CD4-positive, alpha-beta T cell (primary cell): ENCODE measurements at regions of chr6 and their contacts with region 1.

Region 1: GRCh38 chr6:34196126-34196830 is 40.4 kb upstream of the HMGA1 start:
- DNase-seq: peak; percentile 79 to 96 (median 90)
- ATAC-seq: peak; percentile 99
- H3K4me3 ChIP-seq: peak overlapping the region; percentile 64
- H3K4me3 Mint-ChIP-seq: peak overlapping the region; percentile 86
- H3K27ac ChIP-seq: no peak overlapping the region
- H3K27ac Mint-ChIP-seq: no peak overlapping the region
- H3K4me1 ChIP-seq: peaks cover 12% of the 10 kb centered on the region
- H3K4me1 Mint-ChIP-seq: peaks cover 7% of the 10 kb centered on the region
- H3K27me3 ChIP-seq: no peaks in the 10 kb centered on the region
- H3K27me3 Mint-ChIP-seq: no peaks in the 10 kb centered on the region
- CTCF ChIP-seq: peak; percentile 98

Region 2: GRCh38 chr6:33579828-33580714 is 616.2 kb before region 1 on chr6 and contains the start of gene BAK1:
- CTCF ChIA-PET with region 1: no interaction called
- POLR2A ChIA-PET with region 1: no interaction called
- intact Hi-C with region 1: no loop called
- DNase-seq: peak; percentile 64 to 92 (median 78)
- ATAC-seq: peak; percentile 93
- H3K4me3 ChIP-seq: peak within 1 kb of the TSS; percentile 99
- H3K4me3 Mint-ChIP-seq: peak within 1 kb of the TSS; percentile 96
- H3K27ac ChIP-seq: peak within 1 kb of the TSS; percentile 82 to 88
- H3K27ac Mint-ChIP-seq: peak within 1 kb of the TSS; percentile 97
- H3K4me1 ChIP-seq: peaks cover 51% of the 10 kb centered on the region
- H3K4me1 Mint-ChIP-seq: peaks cover 44% of the 10 kb centered on the region
- H3K27me3 ChIP-seq: no peaks in the 10 kb centered on the region
- H3K27me3 Mint-ChIP-seq: no peaks in the 10 kb centered on the region
- CTCF ChIP-seq: peak; percentile 63
- total RNA-seq, gene BAK1: 38.3 to 40.8 TPM

Region 3: DNA sequence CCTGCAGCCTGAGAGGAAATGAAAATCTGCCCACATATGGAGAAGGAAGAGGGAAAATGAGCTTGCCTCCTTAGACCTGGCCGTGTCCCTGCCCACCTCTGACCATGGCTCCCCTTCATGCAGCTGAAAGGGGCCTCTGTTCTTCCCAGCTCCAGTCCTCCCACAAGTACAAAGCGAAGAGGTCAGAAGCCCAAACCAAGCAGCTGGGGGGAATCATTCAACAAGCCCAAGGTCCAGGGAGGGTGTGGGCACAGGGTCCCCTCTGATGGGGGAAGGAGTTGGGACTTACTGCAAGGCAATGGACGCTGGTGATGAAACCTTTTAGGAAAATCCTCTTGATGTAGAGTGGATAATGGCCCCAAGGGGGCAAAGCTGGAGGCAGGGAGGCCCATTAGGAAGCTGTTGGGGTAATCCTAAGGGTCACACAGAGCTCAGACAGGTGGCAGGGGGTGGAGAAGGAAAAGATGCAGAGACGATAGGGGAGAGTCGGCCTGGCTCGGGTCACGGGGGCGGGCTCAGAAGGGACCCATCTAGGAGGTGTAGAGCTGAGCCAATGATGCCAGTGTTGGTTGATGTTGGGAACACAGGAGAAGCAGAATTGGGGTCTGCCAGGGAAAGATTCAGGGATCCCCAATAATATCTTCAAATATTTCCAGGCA is 34.3 kb before region 1 on chr6:
- CTCF ChIA-PET with region 1: interaction called, 12 read pairs
- POLR2A ChIA-PET with region 1: interaction called, 3 read pairs
- intact Hi-C with region 1: loop called (anchors 2 kb)
- DNase-seq: no peak
- ATAC-seq: no peak
- H3K4me3 ChIP-seq: no peak overlapping the region
- H3K4me3 Mint-ChIP-seq: no peak overlapping the region
- H3K27ac ChIP-seq: no peak overlapping the region
- H3K27ac Mint-ChIP-seq: no peak overlapping the region
- H3K4me1 ChIP-seq: peaks cover 3% of the 10 kb centered on the region
- H3K4me1 Mint-ChIP-seq: no peaks in the 10 kb centered on the region
- H3K27me3 ChIP-seq: no peaks in the 10 kb centered on the region
- H3K27me3 Mint-ChIP-seq: no peaks in the 10 kb centered on the region
- CTCF ChIP-seq: no peak

Region 4: GRCh38 chr6:34223956-34224940 is 28.0 kb after region 1 on chr6:
- CTCF ChIA-PET with region 1: interaction called, 7 read pairs
- POLR2A ChIA-PET with region 1: interaction called, 16 read pairs
- intact Hi-C with region 1: no loop called
- DNase-seq: peak; percentile 87 to 99 (median 93)
- ATAC-seq: peak; percentile 95
- H3K4me3 ChIP-seq: peak overlapping the region; percentile 62
- H3K4me3 Mint-ChIP-seq: peak overlapping the region; percentile 63
- H3K27ac ChIP-seq: peak overlapping the region; percentile 89 to 99
- H3K27ac Mint-ChIP-seq: peak overlapping the region; percentile 75
- H3K4me1 ChIP-seq: peaks cover 20% of the 10 kb centered on the region
- H3K4me1 Mint-ChIP-seq: peaks cover 6% of the 10 kb centered on the region
- H3K27me3 ChIP-seq: no peaks in the 10 kb centered on the region
- H3K27me3 Mint-ChIP-seq: no peaks in the 10 kb centered on the region
- CTCF ChIP-seq: no peak

Region 5: GRCh38 chr6:34414999-34415858 is 219.0 kb after region 1 on chr6:
- CTCF ChIA-PET with region 1: interaction called, 55 read pairs
- POLR2A ChIA-PET with region 1: interaction called, 12 read pairs
- intact Hi-C with region 1: loop called (anchors 1 kb)
- DNase-seq: peak in 10 of 14 experiments; percentile 9 to 76 (median 38)
- ATAC-seq: peak; percentile 85
- H3K4me3 ChIP-seq: no peak overlapping the region
- H3K4me3 Mint-ChIP-seq: no peak overlapping the region
- H3K27ac ChIP-seq: no peak overlapping the region
- H3K27ac Mint-ChIP-seq: peak overlapping the region; percentile 38
- H3K4me1 ChIP-seq: no peaks in the 10 kb centered on the region
- H3K4me1 Mint-ChIP-seq: peaks cover 22% of the 10 kb centered on the region
- H3K27me3 ChIP-seq: no peaks in the 10 kb centered on the region
- H3K27me3 Mint-ChIP-seq: no peaks in the 10 kb centered on the region
- CTCF ChIP-seq: peak; percentile 64

Region 6: GRCh38 chr6:35139908-35140655 is 943.8 kb after region 1 on chr6:
- CTCF ChIA-PET with region 1: no interaction called
- POLR2A ChIA-PET with region 1: no interaction called
- intact Hi-C with region 1: loop called in 1 of 2 experiments (anchors 2 kb)
- DNase-seq: peak; percentile 8 to 80 (median 26)
- ATAC-seq: no peak
- H3K4me3 ChIP-seq: no peak overlapping the region
- H3K4me3 Mint-ChIP-seq: peak overlapping the region; percentile 32
- H3K27ac ChIP-seq: no peak overlapping the region
- H3K27ac Mint-ChIP-seq: no peak overlapping the region
- H3K4me1 ChIP-seq: peaks cover 16% of the 10 kb centered on the region
- H3K4me1 Mint-ChIP-seq: peaks cover 11% of the 10 kb centered on the region
- H3K27me3 ChIP-seq: peaks cover 11% of the 10 kb centered on the region in 2 experiments
- H3K27me3 Mint-ChIP-seq: peaks cover 21% of the 10 kb centered on the region
- CTCF ChIP-seq: peak; percentile 85